Left colon (tissue), 2 donors: ENCODE measurements at regions of chr3 and their contacts with region 1.

Region 1: DNA sequence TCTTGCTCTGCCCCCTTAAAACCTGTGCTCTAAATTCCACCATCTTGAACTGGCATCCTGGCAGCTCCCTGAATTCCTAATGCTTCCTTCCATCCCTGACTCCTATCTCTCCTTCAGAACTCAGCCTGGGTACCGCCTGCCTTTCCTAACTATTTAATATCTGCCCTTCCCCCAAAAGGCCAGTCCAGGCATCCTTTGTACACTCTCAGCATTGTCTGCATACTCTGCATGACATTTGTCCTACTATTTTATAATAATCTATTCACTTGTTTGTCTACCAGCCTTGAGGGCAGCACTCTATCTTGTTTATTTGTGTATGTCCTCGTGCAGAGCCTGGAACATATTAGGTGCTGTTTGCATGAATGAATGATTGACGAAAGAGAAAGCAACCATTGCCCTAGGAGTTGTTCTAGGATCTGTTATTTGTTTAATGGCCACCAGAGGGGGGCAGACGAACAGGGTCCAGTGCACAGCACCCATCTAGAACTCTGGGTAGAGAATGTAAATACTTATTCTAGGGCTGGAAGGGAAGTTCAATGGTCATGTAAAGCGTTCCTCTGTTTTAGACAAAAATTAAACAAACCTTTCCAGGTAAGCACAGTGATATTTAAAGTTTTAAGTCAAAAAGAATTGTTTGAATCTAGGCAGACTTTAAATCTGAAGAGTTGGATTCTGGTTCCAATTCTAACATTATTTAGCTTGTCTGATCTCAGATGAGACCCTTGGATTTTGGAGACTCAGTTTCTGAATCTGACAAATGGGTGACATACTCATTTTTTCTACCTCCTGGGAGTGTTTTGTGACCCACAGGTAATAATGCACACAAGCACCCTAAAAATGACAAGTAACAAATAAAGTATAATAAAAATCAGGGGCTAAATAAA is 125.8 kb upstream of the GALNT15 start:
- DNase-seq: peak in 1 of 2 donors; percentile 36
- ATAC-seq: peak; percentile 100

Region 2: GRCh38 chr3:15223685-15224572 is 824.7 kb before region 1 on chr3:
- intact Hi-C with region 1: no loop called
- DNase-seq: no peak
- ATAC-seq: no peak

Region 3: DNA sequence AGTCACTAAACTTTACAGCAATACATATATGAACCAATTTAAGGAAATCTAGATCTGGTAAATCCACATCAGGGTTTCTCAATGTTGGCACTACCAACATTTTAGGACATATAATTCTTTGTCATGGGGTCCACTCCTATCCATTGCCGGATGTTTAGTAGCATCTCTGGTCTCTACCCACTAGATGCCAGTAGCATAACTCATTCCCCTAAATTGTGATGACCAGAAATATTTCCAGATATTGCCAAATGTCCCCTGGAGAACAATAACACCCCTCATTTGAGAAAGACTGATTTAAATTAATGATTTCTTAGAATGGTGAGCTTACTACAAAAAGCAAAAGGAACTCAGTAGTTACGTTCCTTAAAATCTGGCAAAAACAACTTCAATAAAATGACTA is 227.8 kb before region 1 on chr3:
- intact Hi-C with region 1: no loop called
- DNase-seq: no peak
- ATAC-seq: no peak

Region 4: GRCh38 chr3:15942462-15942861 is 106.2 kb before region 1 on chr3:
- intact Hi-C with region 1: no loop called
- DNase-seq: no peak
- ATAC-seq: no peak

Region 5: DNA sequence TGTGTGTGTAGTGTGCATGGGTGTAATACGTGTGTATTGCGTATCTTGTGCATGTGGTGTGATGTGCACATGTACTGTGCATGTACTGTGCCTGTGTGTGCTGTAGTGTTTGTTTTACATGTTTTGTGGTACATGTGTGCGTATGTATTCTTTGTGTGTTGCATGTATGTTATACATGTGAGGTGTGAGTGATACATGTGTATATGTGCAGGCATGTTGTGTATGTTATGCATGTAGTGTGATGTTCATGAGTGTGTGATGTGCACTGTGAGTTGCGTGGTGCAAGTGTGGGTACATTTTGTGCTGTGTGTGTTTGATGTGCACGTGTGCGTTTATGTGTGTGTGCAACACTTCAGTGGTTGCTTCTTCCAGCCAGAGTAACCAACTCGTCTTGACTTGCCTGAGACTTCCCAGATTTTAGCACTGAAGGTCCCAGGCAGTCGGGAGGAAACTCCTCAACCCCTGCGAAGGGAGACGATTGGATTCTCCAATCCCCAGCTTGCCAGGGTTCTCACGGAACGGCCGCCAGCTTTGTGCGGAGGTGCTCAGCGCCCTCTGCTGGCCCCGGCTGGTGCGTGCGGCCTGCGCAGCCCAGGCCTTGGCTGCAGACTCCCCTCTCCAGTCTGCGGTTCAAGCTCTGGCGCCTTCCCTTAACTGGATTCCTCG is 129.4 kb after region 1 on chr3:
- intact Hi-C with region 1: loop called (anchors 2 to 5 kb)
- DNase-seq: peak; percentile 47 to 82
- ATAC-seq: peak; percentile 95

Region 6: DNA sequence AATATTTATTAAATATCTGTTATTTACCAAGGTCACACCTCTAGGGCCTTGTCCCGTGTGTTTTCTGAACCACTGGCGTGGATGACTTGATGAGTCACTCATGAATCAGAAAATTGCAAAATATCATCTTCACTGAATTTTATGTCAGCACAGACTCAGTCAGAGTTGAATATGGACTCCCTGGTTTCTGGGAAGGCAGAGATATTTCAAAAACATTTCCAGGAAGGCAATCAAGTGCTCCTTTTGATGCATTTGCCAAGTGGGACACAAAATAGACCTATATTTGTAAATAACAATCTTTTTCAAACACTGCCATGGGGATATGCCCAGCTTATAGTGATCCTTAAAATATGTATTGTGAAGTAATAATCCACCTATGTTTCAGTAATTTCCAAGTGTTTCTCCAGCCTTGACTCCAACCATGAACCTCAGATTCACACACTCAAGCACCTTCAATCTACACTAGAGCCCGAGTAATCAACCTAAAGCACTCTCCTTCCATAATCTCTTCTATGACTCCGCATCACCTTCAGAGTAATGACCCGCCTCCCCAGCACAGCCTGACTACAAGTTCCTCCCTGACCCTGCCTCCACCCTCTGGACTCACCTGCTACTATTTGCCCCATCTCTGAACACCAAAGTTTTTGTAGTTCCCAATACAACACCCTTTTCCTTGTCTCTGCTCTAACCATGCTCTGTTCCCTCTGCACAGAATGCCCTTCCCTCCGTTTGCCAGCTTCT is 191.8 kb after region 1 on chr3:
- intact Hi-C with region 1: loop called (anchors 5 kb)
- DNase-seq: no peak
- ATAC-seq: no peak

Region 7: GRCh38 chr3:16247276-16248061 is 198.8 kb after region 1 on chr3:
- intact Hi-C with region 1: loop called (anchors 5 kb)
- DNase-seq: peak; percentile 65 to 82
- ATAC-seq: peak; percentile 75

Region 8: GRCh38 chr3:16319307-16319706 is 270.6 kb after region 1 on chr3:
- intact Hi-C with region 1: no loop called
- DNase-seq: peak in 1 of 2 donors; percentile 51
- ATAC-seq: no peak